ENCODE measurements at regions of chr12 and their contacts with region 1.

Region 1: DNA sequence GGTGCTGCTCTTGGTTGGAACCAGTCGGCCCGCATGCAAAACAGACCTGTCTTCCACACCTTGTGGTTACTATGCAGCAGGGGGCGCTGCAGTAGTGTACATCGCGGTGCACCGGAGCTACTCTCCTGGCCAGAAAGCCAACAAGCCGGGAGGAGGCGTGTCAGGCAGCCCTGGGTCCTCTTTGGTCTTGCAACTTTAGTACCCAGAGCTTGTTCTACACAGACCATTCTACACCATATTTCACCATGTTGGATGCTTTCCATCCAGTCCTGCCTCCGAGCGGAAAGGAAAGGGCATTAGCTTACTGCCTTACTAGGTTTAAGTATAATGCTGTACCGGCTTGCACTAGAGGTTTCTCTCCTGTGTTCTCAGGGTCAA is 927 bp upstream of the TMTC2 start:
- DNase-seq: peak; percentile 93 to 98 (median 97)
- H3K4me3 ChIP-seq: peak overlapping the region; percentile 51 to 96 (median 87)
- H3K27ac ChIP-seq: peak overlapping the region; percentile 80 to 100 (median 99)
- H3K27me3 ChIP-seq: no peaks in the 10 kb centered on the region
- CTCF ChIP-seq: peak; percentile 79 to 99 (median 94)

Region 2: DNA sequence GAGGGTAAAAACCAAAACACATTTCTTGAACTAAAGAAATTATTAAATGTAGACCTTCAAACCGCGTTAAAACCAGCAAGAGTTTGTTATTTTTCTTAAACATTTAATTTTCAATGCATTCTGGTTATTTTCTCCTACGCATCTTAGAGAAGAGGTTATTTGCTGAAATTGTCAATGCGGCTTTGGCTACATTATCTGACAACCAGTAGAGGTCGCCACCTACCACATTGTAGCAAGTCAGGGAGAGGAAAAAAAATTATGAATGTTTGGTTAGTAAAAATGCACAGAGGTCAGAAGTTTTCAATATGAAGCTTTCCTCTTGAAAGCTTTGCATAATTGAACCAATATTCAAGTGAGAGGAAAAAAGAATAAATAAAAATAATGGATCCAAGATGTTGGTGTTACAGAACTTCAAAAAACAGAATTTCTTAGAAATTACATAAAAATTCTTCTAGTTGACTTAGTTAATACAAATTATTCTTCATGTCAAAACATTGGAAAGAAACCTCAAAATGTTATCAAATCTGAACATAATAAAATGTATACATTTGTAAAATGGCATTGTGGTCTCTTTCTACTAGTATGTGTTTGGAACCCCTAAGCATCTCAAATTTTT is 158.5 kb before region 1 on chr12:
- intact Hi-C with region 1: loop called (anchors 2 kb)
- DNase-seq: peak in 6 of 10 donors; percentile 33 to 49 (median 44)
- H3K4me3 ChIP-seq: peak overlapping the region in 45 of 59 donors; percentile 2 to 56 (median 31)
- H3K27ac ChIP-seq: peak overlapping the region in 37 of 59 donors; percentile 3 to 88 (median 53)
- H3K27me3 ChIP-seq: no peaks in the 10 kb centered on the region
- CTCF ChIP-seq: peak; percentile 72 to 97 (median 89)

Region 3: GRCh38 chr12:82781309-82781997 is 95.7 kb after region 1 on chr12:
- intact Hi-C with region 1: loop called in 1 of 2 experiments (anchors 5 kb)
- DNase-seq: no peak
- H3K4me3 ChIP-seq: peak overlapping the region in 45 of 59 donors; percentile 3 to 60 (median 28)
- H3K27ac ChIP-seq: peak overlapping the region; percentile 7 to 99 (median 93)
- H3K27me3 ChIP-seq: no peaks in the 10 kb centered on the region
- CTCF ChIP-seq: peak in 5 of 56 donors; percentile 8 to 29 (median 20)

Region 4: GRCh38 chr12:82964446-82964845 is 278.7 kb after region 1 on chr12:
- intact Hi-C with region 1: loop called in 1 of 2 experiments (anchors 10 kb)
- DNase-seq: no peak
- H3K4me3 ChIP-seq: no peak overlapping the region
- H3K27ac ChIP-seq: peak overlapping the region in 43 of 59 donors; percentile 6 to 77 (median 49)
- H3K27me3 ChIP-seq: no peaks in the 10 kb centered on the region
- CTCF ChIP-seq: no peak

Region 5: DNA sequence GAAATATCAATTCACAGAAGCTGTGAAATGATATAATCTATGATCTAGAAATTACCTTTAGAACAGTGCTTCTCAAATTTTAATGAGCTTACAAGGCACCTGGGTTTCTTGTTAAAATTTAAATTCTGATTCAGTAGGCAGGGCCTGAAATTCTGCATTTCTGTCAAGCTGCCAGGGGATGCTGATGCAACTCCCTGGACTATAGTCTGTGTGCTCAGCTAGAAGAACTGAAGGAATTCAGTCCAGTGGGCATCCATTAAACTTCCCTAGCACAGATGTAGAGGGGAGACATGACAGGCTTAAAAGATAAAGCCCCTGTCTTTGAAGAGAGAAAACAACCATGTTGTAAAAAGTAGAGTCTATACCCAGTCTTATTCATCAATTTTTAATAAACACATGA is 442.8 kb after region 1 on chr12:
- intact Hi-C with region 1: loop called in 1 of 2 experiments (anchors 10 kb)
- DNase-seq: no peak
- H3K4me3 ChIP-seq: no peak overlapping the region
- H3K27ac ChIP-seq: peak overlapping the region in 1 of 59 donors; percentile 44
- H3K27me3 ChIP-seq: no peaks in the 10 kb centered on the region
- CTCF ChIP-seq: no peak